Dorsolateral prefrontal cortex (tissue), 120 donors: ENCODE measurements at regions of chr6 and their contacts with region 1.

Region 1: DNA sequence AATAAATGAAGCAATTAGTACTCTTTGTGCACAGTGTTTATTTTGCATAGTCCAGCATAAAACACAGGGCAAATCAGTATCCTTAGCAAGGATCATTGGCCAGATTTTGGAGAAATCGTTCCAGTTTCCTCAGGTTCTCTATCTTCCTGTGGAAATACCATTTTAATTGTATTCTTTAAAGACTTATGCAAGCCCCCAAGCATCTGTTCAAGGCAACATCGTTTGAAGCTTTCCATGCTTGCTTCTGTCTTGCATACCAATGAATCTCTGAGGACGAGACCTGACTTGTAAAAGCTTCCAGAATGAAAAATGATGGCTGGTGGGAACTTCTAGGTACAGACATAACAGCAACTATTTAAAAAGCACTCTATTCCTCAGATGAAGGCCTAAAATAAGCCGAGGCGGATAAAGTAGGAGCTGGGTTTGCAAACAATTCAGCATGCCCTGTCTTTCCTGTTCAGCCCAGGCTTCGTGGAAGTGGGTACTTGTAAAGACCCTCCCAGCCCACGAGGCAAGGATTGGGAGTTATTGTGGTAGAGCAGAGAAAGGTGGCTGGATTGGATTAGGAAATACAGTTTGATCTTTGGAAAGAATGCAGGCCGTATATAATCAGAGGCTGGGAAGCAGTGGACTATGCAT is 21.6 kb downstream of the NRSN1 start:
- DNase-seq: no peak
- H3K4me3 ChIP-seq: no peak overlapping the region
- H3K27ac ChIP-seq: peak overlapping the region in 35 of 59 donors; percentile 6 to 81 (median 49)
- H3K27me3 ChIP-seq: peaks cover 0 to 8% (median 0%) of the 10 kb centered on the region in 45 donors
- CTCF ChIP-seq: no peak

Region 2: DNA sequence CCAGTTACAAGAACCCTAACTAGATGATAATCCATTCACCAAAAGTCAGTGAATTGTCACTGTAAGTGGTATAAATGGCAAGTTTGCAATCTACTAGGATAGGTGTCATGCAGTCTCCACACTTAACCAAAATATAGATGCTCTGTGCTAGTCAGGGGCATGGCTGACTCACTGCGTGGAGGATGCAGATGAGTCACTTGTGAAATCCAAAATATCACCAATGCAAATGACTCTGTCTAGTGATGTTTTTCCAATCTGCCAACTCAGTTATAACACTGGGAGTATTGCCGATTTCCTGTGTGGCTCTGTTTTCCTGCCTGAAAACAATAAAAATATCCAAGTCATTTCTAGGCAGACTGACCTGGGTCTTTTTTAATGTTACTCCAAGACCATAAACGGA is 69.4 kb before region 1 on chr6:
- intact Hi-C with region 1: loop called in 1 of 2 experiments (anchors 2 kb)
- DNase-seq: peak in 5 of 10 donors; percentile 9 to 65 (median 47)
- H3K4me3 ChIP-seq: no peak overlapping the region
- H3K27ac ChIP-seq: no peak overlapping the region
- H3K27me3 ChIP-seq: peaks cover 0 to 7% (median 0%) of the 10 kb centered on the region in 45 donors
- CTCF ChIP-seq: no peak